ENCODE measurements at regions of chr7 and their contacts with region 1.

Region 1: DNA sequence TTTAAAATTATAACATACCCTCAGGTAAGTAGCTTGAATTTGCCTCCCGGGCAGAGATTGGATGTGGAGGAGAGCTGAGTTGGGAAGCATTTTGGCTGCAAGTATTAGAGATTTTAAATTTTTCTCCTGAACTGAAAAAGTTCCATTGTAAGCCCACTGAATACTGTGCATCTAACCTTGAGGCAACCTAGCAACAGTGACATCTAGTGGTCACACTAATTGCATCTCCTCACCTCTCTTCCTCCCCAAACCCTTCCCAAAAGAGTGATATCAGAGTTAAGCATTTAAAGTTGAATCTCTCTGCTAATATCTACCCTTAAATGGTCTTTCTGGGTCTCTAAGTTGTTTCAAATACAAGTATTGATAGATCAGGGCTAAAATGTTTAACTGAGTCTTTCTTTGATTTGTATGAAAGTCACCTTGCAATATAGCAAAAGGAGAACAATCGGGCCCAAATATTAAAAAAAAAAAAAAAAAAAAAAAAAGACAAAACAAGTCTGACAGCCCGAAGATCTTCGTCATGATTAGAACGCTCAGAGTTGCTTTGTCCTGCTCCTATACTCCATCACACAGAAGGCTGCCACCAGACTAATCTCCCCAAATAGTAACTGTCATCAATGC is 40.4 kb upstream of the DLX5 start:
- DNase-seq: no peak
- H3K4me3 ChIP-seq: no peak overlapping the region
- H3K27ac ChIP-seq: no peak overlapping the region
- H3K4me1 ChIP-seq: no peaks in the 10 kb centered on the region
- H3K27me3 ChIP-seq: no peaks in the 10 kb centered on the region
- CTCF ChIP-seq: peak in 4 of 5 experiments; percentile 41 to 64 (median 62)
- EP300 ChIP-seq: no peak
- POLR2A ChIP-seq: no peak

Region 2: GRCh38 chr7:95916573-95917297 is 1148.3 kb before region 1 on chr7:
- in situ Hi-C with region 1: loop called in 1 of 4 experiments (anchors 25 kb)
- intact Hi-C with region 1: no loop called
- DNase-seq: peak; percentile 79
- H3K4me3 ChIP-seq: peak overlapping the region in 1 of 4 donors; percentile 10
- H3K27ac ChIP-seq: no peak overlapping the region
- H3K4me1 ChIP-seq: peaks cover 0 to 8% (median 0%) of the 10 kb centered on the region in 4 donors
- H3K27me3 ChIP-seq: peaks cover 14% of the 10 kb centered on the region
- CTCF ChIP-seq: peak; percentile 77 to 93 (median 91)
- EP300 ChIP-seq: no peak
- POLR2A ChIP-seq: no peak

Region 3: DNA sequence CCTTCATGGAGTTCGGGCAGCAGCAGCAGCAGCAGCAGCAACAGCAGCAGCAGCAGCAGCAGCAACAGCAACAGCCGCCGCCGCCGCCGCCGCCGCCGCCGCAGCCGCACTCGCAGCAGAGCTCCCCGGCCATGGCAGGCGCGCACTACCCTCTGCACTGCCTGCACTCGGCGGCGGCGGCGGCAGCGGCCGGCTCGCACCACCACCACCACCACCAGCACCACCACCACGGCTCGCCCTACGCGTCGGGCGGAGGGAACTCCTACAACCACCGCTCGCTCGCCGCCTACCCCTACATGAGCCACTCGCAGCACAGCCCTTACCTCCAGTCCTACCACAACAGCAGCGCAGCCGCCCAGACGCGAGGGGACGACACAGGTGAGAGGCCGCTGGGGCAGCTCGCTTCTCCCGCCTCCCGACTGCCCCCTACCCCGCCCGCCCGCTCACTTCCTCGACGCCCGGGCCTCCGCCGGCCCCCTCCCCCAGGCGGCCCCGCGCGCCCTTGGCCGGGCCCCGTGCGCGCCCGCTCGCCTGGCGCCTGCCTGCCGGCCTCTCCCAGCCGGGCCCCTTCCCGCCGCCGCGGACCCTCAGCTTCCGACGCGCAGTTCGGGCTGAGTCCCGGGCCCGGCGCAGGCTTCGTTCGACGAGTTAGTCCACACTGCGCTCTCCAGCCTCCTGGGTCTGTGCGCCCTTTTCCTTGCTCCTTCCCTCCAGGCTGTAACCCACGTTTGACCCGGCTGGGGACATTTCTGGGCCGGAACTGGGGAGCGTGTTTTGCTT is 58.9 kb before region 1 on chr7:
- in situ Hi-C with region 1: no loop called
- intact Hi-C with region 1: no loop called
- DNase-seq: no peak
- H3K4me3 ChIP-seq: peak overlapping the region in 3 of 4 donors; percentile 29 to 46 (median 31)
- H3K27ac ChIP-seq: no peak overlapping the region
- H3K4me1 ChIP-seq: peaks cover 0 to 40% (median 19%) of the 10 kb centered on the region in 4 donors
- H3K27me3 ChIP-seq: peaks cover 100% of the 10 kb centered on the region
- CTCF ChIP-seq: no peak
- EP300 ChIP-seq: no peak
- POLR2A ChIP-seq: no peak

Region 4: DNA sequence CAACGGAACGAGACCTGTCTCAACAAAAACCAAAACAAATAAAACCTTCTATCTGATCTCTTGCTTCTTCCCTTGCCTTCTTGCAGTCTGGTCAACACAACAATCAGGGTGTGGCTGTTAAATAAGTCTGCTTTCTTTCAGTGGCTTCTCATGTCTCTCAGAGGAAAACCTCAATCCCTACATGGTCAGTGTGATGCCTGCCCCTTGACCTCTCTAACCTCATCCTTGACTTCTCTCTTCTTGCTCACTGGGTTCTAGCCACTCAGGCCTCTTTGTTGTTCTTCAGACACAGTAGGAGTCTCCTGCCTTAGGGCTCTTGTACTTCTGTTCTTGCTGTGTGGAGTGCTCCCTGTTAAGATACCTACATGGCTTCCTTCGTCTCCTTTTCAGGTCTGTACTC is 272.8 kb after region 1 on chr7:
- in situ Hi-C with region 1: no loop called
- intact Hi-C with region 1: no loop called
- DNase-seq: no peak
- H3K4me3 ChIP-seq: no peak overlapping the region
- H3K27ac ChIP-seq: no peak overlapping the region
- H3K4me1 ChIP-seq: peaks cover 0 to 8% (median 0%) of the 10 kb centered on the region in 4 donors
- H3K27me3 ChIP-seq: no peaks in the 10 kb centered on the region
- CTCF ChIP-seq: no peak
- EP300 ChIP-seq: no peak
- POLR2A ChIP-seq: no peak